ENCODE measurements at regions of chr19 and their contacts with region 1.

Region 1: GRCh38 chr19:29761575-29762232 is 46.6 kb upstream of the C19orf12 start:
- DNase-seq: no peak
- H3K4me3 Mint-ChIP-seq: no peak overlapping the region
- H3K27ac Mint-ChIP-seq: no peak overlapping the region
- H3K4me1 Mint-ChIP-seq: no peaks in the 10 kb centered on the region
- H3K27me3 Mint-ChIP-seq: no peaks in the 10 kb centered on the region
- CTCF ChIP-seq: no peak

Region 2: DNA sequence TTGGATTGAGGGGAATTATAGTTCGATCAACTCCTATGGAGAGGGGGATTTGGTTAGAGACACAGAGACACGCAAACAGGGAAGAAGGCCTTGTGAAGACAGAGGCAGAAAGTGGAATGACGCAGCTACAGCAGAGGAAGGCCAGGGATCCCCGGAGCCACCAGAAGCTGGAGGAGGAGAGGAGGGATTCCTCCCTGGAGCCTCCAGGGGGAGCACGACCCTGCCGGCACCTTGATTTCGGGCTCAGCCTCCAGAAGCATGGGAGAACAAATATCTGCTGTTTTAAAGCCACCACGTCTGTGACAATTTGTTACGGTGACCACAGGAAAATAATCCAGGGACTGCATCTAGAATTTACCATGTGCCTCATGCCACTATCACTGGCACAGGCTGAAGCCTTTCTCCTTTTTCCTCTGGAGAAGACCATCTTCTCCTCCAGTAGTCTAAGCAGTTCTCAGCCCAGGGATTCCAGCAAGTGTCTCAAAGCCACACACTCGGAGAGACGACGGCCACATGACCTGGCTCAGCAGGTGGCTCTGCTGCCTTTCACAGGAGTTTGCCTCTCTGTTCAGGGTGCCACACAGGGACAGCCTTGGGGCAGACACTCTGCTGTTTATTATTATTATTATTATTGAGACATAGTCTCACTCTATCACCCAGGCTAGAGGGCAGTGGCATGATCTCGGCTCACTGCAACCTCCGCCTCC is 10.2 kb after region 1 on chr19:
- CTCF ChIA-PET with region 1: interaction called, 25 read pairs
- POLR2A ChIA-PET with region 1: no interaction called
- intact Hi-C with region 1: no loop called
- DNase-seq: peak; percentile 60
- H3K4me3 Mint-ChIP-seq: no peak overlapping the region
- H3K27ac Mint-ChIP-seq: no peak overlapping the region
- H3K4me1 Mint-ChIP-seq: peaks cover 5% of the 10 kb centered on the region
- H3K27me3 Mint-ChIP-seq: no peaks in the 10 kb centered on the region
- CTCF ChIP-seq: peak; percentile 44

Region 3: GRCh38 chr19:29844891-29845572 is 83.3 kb after region 1 on chr19:
- CTCF ChIA-PET with region 1: interaction called, 17 read pairs
- POLR2A ChIA-PET with region 1: no interaction called
- intact Hi-C with region 1: loop called (anchors 1 kb)
- DNase-seq: peak; percentile 93
- H3K4me3 Mint-ChIP-seq: peak overlapping the region; percentile 94
- H3K27ac Mint-ChIP-seq: peak overlapping the region; percentile 94
- H3K4me1 Mint-ChIP-seq: peaks cover 9% of the 10 kb centered on the region
- H3K27me3 Mint-ChIP-seq: peaks cover 20% of the 10 kb centered on the region
- CTCF ChIP-seq: no peak

Region 4: DNA sequence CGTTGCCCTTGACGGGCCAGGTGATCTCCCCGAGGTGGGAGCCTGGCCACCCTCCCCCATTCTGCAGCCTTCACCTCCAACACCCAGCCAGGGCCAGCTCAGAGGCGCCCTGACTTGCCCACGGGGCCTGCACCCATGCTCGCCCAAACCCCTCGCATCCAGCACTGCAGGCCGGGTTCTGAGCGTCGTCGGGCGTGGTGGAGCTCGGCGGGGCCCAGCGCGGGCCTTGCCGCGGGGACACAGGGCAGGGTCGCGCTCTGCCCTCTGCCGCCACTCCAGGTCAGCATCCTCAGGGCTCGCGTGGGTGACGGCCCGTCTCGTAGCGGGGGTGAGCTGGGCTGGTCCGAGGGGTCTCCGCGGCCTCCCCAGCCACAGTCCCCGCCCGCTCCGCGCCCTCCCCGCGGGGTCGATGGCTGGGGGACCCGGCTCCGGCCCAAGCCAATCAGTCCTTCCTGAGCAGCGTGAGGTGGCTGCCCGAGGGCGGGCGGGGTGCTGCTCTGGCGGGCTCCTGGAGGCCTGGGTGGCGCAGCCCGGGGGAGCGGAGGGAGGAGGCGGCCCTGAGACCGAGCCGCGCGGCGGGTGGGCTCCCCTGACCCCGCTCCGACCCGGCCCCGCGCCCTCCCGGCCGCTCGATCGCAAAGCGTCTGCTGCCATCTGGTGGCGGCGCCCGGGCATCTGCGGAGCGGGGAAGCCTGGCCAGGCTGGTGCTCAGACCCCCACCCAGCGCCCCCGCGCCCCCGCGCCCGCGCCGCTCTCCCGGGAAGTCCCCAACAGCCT is 111.5 kb after region 1 on chr19:
- CTCF ChIA-PET with region 1: interaction called, 73 read pairs
- POLR2A ChIA-PET with region 1: no interaction called
- intact Hi-C with region 1: loop called (anchors 1 kb)
- DNase-seq: peak; percentile 23
- H3K4me3 Mint-ChIP-seq: no peak overlapping the region
- H3K27ac Mint-ChIP-seq: no peak overlapping the region
- H3K4me1 Mint-ChIP-seq: peaks cover 11% of the 10 kb centered on the region
- H3K27me3 Mint-ChIP-seq: peaks cover 10% of the 10 kb centered on the region
- CTCF ChIP-seq: peak; percentile 87

Region 5: GRCh38 chr19:30649934-30650614 is 888.4 kb after region 1 on chr19:
- CTCF ChIA-PET with region 1: interaction called, 8 read pairs
- POLR2A ChIA-PET with region 1: no interaction called
- intact Hi-C with region 1: loop called (anchors 1 kb)
- DNase-seq: peak; percentile 56
- H3K4me3 Mint-ChIP-seq: no peak overlapping the region
- H3K27ac Mint-ChIP-seq: no peak overlapping the region
- H3K4me1 Mint-ChIP-seq: no peaks in the 10 kb centered on the region
- H3K27me3 Mint-ChIP-seq: no peaks in the 10 kb centered on the region
- CTCF ChIP-seq: peak; percentile 61